PC-9 (cell line): ENCODE measurements at regions of chr7 and their contacts with region 1.

Region 1: DNA sequence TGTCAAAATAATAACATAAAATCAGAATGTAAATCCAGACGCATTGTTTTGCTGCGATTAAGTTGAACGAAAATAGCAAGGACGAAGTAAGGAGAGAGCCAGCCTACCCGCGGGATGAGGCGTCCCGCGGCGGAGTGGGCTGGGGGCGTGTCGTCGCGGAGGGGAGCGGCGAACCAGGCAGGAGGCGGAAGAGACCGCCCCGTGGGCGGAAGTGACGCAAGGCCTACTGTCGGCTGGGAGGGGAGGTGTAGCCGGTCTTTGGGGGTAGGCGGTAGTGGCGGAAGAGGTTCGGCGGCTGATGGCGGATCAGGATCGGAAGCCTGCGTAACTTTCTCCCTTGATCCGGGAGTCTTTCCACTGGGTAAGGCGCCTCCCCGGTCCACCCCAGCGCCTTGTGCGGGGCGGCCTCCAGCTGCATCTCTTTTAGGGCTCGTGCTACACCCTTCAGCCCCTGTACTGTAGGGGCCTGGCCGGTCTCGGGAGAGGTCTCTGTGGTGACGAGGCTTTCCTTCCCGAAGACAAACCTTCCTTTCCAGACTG is at the start of gene TAX1BP1:
- DNase-seq: peak; percentile 91 to 96
- H3K4me3 ChIP-seq: peak within 1 kb of the TSS; percentile 84
- H3K27ac ChIP-seq: peak within 1 kb of the TSS; percentile 84
- H3K4me1 ChIP-seq: peaks cover 70% of the 10 kb centered on the region
- H3K27me3 ChIP-seq: no peaks in the 10 kb centered on the region
- CTCF ChIP-seq: no peak
- total RNA-seq, gene TAX1BP1: 143 and 174 TPM in 2 replicates

Region 2: GRCh38 chr7:27112955-27113949 is 626.7 kb before region 1 on chr7:
- CTCF ChIA-PET with region 1: no interaction called
- POLR2A ChIA-PET with region 1: no interaction called
- intact Hi-C with region 1: loop called (anchors 10 kb)
- DNase-seq: peak; percentile 76 to 90
- H3K4me3 ChIP-seq: peak overlapping the region; percentile 80
- H3K27ac ChIP-seq: peak overlapping the region; percentile 92
- H3K4me1 ChIP-seq: peaks cover 47% of the 10 kb centered on the region
- H3K27me3 ChIP-seq: no peaks in the 10 kb centered on the region
- CTCF ChIP-seq: no peak

Region 3: DNA sequence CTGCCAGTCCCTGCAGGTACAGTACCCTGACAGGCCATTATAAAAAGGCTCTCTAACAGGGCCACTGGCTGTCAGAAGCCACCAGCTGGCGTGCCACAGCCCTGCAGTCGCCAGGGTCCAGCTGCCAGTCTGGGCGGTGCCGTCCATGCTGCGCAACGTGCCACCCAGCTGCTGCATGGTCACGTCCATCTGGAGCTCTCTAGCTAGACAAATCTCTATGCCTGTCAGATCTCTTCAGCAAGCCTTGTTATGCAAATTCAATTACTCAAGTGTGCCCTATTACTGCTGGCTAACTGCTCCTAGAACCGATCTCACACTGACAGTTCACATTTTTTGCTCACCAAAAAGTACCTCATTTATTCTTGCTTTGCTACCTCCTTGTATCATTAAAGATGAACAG is 153.2 kb before region 1 on chr7:
- CTCF ChIA-PET with region 1: no interaction called
- POLR2A ChIA-PET with region 1: no interaction called
- intact Hi-C with region 1: no loop called
- DNase-seq: no peak
- H3K4me3 ChIP-seq: no peak overlapping the region
- H3K27ac ChIP-seq: no peak overlapping the region
- H3K4me1 ChIP-seq: no peaks in the 10 kb centered on the region
- H3K27me3 ChIP-seq: no peaks in the 10 kb centered on the region
- CTCF ChIP-seq: no peak

Region 4: GRCh38 chr7:27640914-27641580 is 98.9 kb before region 1 on chr7:
- CTCF ChIA-PET with region 1: interaction called, 3 read pairs
- POLR2A ChIA-PET with region 1: interaction called, 3 read pairs
- intact Hi-C with region 1: loop called (anchors 1 kb)
- DNase-seq: peak; percentile 87 to 96
- H3K4me3 ChIP-seq: peak overlapping the region; percentile 8; the same call in 1 of the 2 replicates
- H3K27ac ChIP-seq: peak overlapping the region; percentile 90
- H3K4me1 ChIP-seq: peaks cover 37% of the 10 kb centered on the region
- H3K27me3 ChIP-seq: no peaks in the 10 kb centered on the region
- CTCF ChIP-seq: peak; percentile 40; the same call in 1 of the 2 replicates

Region 5: GRCh38 chr7:27677912-27678612 is 61.9 kb before region 1 on chr7:
- CTCF ChIA-PET with region 1: no interaction called
- POLR2A ChIA-PET with region 1: interaction called, 37 read pairs
- intact Hi-C with region 1: loop called (anchors 1 kb)
- DNase-seq: peak; percentile 51 to 98
- H3K4me3 ChIP-seq: peak overlapping the region; percentile 11; the same call in 1 of the 2 replicates
- H3K27ac ChIP-seq: peak overlapping the region; percentile 98
- H3K4me1 ChIP-seq: peaks cover 33% of the 10 kb centered on the region
- H3K27me3 ChIP-seq: no peaks in the 10 kb centered on the region
- CTCF ChIP-seq: no peak

Region 6: DNA sequence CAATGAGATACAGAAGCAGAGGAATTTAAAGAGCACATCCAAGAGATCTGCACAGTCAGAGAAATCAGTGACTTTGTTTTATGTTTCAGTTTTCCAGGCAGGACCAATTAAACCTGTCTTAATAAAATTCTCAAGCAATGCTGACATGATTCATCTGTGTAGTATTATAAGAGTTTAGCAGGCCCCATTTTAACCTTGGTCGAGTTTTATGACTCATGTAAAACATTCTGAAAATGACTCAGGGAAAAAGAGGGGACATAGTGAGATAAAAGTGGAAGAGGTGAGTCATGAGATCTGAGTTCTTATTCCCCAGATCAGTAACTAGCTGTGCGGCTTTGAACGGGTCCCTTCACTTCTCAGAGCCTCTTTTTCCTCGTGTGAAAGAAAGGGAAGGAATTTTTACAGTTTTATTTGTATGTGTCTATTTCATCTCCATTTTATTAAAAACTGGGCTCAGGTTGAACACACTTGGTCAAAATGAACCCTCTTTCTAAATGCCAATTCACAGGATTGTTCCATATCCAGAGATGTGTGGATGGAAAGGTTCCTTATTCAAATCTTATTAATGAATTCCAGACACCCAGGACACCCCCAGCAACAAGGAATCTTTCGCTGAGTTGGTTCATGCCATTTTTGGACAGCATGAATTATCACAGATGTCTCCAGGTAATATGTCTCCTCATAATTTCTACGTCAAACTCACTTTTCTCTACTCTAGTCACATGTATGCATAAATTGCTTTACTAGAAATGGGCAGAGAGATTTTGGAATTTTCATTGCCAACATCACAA is 297.4 kb after region 1 on chr7:
- CTCF ChIA-PET with region 1: no interaction called
- POLR2A ChIA-PET with region 1: no interaction called
- intact Hi-C with region 1: loop called (anchors 1 kb)
- DNase-seq: peak; percentile 43 to 100
- H3K4me3 ChIP-seq: peak overlapping the region; percentile 22; the same call in 1 of the 2 replicates
- H3K27ac ChIP-seq: peak overlapping the region; percentile 85
- H3K4me1 ChIP-seq: peaks cover 73% of the 10 kb centered on the region
- H3K27me3 ChIP-seq: no peaks in the 10 kb centered on the region
- CTCF ChIP-seq: no peak